K562 (cell line): ENCODE measurements at regions of chr12 and their contacts with region 1.

Region 1: GRCh38 chr12:116277393-116278278 is at the start of gene MED13L:
- DNase-seq: peak; percentile 92 to 98 (median 98)
- ATAC-seq: peak; percentile 81
- H3K4me3 ChIP-seq: peak within 1 kb of the TSS; percentile 79
- H3K27ac ChIP-seq: peak within 1 kb of the TSS; percentile 86
- H3K4me1 ChIP-seq: peaks cover 13 to 19% of the 10 kb centered on the region in 2 experiments
- H3K27me3 ChIP-seq: no peaks in the 10 kb centered on the region
- CTCF ChIP-seq: peak in 2 of 3 experiments; percentile 45 to 48; a peak in 4 of 6 replicates
- EP300 ChIP-seq: no peak
- POLR2A ChIP-seq: no peak
- RAD21 ChIP-seq: peak; percentile 42 to 57
- polyA plus RNA-seq, gene MED13L: 13.4 to 22.0 TPM

Region 2: GRCh38 chr12:116358893-116359761 is 81.5 kb after region 1 on chr12:
- CTCF ChIA-PET with region 1: no interaction called
- POLR2A ChIA-PET with region 1: interaction called, 4 read pairs
- in situ Hi-C with region 1: no loop called
- intact Hi-C with region 1: loop called (anchors 5 kb)
- DNase-seq: peak; percentile 89 to 98 (median 92)
- ATAC-seq: peak; percentile 92
- H3K4me3 ChIP-seq: peak overlapping the region; percentile 30
- H3K27ac ChIP-seq: peak overlapping the region; percentile 94
- H3K4me1 ChIP-seq: peaks cover 19 to 42% of the 10 kb centered on the region in 2 experiments
- H3K27me3 ChIP-seq: no peaks in the 10 kb centered on the region
- CTCF ChIP-seq: no peak
- EP300 ChIP-seq: peak; percentile 56
- POLR2A ChIP-seq: peak; percentile 57
- RAD21 ChIP-seq: peak in 1 of 2 experiments; percentile 4; a peak in 1 of 4 replicates

Region 3: GRCh38 chr12:116384691-116385485 is 107.3 kb after region 1 on chr12:
- CTCF ChIA-PET with region 1: no interaction called
- POLR2A ChIA-PET with region 1: no interaction called
- in situ Hi-C with region 1: no loop called
- intact Hi-C with region 1: loop called (anchors 2 kb)
- DNase-seq: peak in 3 of 4 experiments; percentile 31 to 62 (median 32)
- ATAC-seq: peak; percentile 31
- H3K4me3 ChIP-seq: no peak overlapping the region
- H3K27ac ChIP-seq: peak overlapping the region; percentile 85
- H3K4me1 ChIP-seq: peaks cover 47 to 51% of the 10 kb centered on the region in 2 experiments
- H3K27me3 ChIP-seq: no peaks in the 10 kb centered on the region
- CTCF ChIP-seq: no peak
- EP300 ChIP-seq: 0 out of 2 replicates have a peak, but pooled peaks have one; percentile 24
- POLR2A ChIP-seq: no peak
- RAD21 ChIP-seq: no peak

Region 4: DNA sequence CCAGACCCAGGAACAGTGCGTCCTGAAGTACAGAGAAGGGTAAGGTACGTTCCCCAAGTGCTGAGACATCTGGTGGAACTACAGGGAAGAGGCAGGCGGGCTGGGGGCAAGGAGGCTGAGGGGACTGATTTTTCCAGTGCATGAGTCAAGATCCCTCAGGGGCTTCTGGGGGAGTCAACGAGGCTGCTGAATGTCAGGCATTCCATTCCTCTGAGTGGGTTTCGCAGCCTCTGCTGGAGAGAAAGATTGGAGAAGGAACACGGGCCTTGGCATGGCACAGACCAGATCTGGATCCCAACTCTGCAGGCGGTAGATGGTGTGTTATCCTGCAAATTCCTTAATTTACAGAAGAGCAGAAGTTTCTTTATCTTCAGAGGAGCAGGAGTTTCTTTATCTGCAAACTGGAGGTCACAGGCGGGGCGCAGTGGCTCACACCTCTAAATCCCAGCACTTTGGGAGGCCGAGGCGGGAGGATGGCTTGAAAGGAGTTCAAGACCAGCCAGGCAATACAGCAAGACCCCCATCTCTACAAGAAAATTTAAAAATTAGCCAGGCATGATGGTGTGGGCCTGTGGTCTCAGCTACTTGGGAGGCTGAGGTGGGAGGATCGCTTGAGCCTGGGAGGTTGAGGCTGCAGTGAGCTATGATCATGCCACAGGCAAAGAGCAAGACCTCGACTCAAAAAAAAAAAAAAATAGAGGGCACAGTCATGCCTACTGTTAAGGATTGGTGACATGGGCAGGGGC is 148.9 kb after region 1 on chr12:
- CTCF ChIA-PET with region 1: no interaction called
- POLR2A ChIA-PET with region 1: no interaction called
- in situ Hi-C with region 1: no loop called
- intact Hi-C with region 1: loop called (anchors 5 kb)
- DNase-seq: peak; percentile 43 to 65 (median 50)
- ATAC-seq: peak; percentile 71
- H3K4me3 ChIP-seq: no peak overlapping the region
- H3K27ac ChIP-seq: no peak overlapping the region; the same call in 2 of the 3 replicates
- H3K4me1 ChIP-seq: peaks cover 24 to 26% of the 10 kb centered on the region in 2 experiments
- H3K27me3 ChIP-seq: no peaks in the 10 kb centered on the region
- CTCF ChIP-seq: peak; percentile 17 to 31 (median 26); a peak in 2 of 6 replicates
- EP300 ChIP-seq: peak; percentile 72
- POLR2A ChIP-seq: no peak
- RAD21 ChIP-seq: peak; percentile 24 to 44; a peak in 3 of 4 replicates

Region 5: DNA sequence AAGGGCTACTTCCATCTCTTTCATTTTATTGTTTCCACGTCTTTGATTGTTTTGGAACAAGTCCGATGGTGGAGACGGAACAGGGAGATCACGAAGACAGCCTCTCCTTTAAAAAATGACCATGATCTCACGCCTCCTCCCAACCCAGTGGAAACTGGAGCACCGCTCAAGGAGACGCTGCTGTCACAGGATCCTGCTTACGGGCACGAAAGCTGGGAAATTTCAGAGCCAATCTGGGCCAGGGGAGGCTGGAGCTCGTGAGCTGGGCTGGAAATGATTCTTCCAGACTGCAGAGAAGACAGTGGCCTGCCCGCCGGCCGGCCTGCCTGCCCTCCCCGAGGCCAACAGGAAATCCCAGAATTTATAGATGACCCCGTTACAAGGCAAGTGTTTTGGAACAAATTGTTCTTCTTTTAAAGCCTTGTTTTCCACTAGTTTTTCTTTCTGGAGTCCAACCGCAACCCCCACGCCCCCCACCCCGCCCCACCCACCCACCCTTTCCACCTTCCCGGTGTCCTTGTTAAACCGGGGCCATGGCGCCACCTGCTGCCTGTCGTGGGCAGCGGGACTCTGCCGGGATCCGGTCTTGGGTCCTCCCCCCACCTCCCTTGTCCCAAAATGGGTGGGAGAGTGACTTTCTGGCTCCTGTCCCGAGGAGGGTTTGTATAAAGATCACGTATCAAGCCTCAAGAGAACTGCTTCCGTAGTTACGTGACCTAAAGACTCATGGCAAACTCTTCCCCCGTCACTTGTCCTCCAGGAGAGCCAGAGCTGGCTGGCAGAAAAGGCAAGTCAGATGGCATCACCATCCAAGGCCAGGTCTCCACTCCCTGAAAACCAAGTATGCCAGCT is 321.9 kb after region 1 on chr12:
- CTCF ChIA-PET with region 1: no interaction called
- POLR2A ChIA-PET with region 1: no interaction called
- in situ Hi-C with region 1: no loop called
- intact Hi-C with region 1: loop called (anchors 2 kb)
- DNase-seq: peak; percentile 87 to 90 (median 89)
- ATAC-seq: peak; percentile 90
- H3K4me3 ChIP-seq: no peak overlapping the region
- H3K27ac ChIP-seq: peak overlapping the region; percentile 85
- H3K4me1 ChIP-seq: peaks cover 30 to 39% of the 10 kb centered on the region in 2 experiments
- H3K27me3 ChIP-seq: no peaks in the 10 kb centered on the region
- CTCF ChIP-seq: peak; percentile 65 to 71 (median 66)
- EP300 ChIP-seq: no peak
- POLR2A ChIP-seq: no peak
- RAD21 ChIP-seq: peak in 1 of 2 experiments; percentile 65; a peak in 3 of 4 replicates